Activated naive CD4-positive, alpha-beta T cell treated with anti-CD3 and anti-CD28 coated beads for 36 hours (primary cell): ENCODE measurements at regions of chr6 and their contacts with region 1.

Region 1: DNA sequence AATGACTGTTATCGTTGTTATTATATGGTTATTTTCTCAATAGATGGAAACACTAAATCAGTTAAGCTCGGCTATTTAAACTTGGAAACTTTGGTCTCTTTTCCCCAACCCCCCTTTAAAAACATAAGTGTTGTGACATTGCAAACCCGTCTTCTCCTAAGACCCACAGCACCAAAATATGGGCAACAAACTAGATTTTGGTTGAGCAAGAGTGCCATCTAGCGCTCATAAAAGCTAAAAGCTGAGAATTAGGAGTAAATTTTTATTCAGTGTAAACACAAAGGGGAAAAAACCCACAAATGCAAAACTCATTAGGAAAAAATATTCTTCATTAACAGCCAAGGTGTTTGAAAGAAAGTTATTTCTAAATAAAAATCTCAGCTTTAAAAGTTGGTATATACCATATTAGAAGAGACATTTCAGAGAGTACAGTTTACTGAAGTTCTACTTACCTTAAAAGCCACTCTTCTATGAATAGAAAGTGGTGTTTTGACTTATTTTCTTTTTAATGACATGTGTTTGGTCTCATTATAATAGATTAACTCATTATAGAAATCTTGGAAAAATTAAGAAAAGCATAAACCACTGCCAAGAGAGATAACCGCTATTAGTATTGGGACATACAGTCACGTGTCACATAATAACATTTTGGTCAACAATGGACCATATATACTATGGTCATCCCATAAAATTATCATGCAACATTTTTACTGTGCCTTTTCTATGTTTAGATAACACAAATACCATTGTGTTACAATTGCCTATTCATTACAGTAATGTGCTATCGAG is 21.1 kb downstream of the SESN1 start:
- DNase-seq: peak; percentile 66
- H3K4me3 Mint-ChIP-seq: peak overlapping the region; percentile 20
- H3K27ac Mint-ChIP-seq: no peak overlapping the region
- H3K4me1 Mint-ChIP-seq: peaks cover 20% of the 10 kb centered on the region
- H3K27me3 Mint-ChIP-seq: no peaks in the 10 kb centered on the region

Region 2: DNA sequence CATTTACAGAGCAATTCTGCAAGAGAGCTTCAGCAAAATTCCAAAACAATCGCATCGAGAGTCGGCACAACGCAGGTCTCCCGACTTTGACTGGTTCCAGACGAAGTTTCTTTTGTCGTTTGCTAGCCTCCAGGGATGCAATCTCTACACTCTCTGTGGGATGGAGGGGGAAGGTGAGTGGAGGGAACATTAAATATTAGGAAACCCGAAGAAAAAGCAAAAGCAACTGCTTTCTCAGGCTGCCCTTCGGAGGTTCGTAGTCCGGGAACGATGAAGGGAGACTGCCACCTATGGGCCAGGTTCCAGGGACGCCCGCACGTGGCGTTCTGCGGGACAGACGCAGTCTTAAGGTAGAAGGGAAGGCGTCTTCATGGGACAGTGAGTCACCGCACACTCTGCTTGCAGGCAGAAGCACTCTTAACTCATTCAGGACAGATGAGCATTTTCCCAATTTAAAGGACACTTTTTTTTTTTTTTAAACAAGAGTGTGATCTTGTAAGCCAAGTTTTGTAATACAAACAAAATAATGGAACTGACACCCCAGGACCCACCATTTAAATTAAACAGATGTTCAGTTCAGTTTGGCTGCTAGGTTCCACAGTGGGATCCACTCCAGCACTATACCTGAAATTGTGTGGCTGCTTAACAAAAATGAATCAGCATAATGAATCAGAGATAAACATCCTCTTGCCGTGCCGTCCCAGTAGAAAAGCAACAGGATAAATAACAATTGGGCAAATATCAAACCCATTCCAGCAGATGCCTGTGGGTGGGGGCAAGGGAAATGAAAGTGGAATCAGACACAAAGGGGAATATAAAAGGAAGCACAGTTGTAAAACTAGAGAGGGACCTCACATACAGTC is 291.1 kb before region 1 on chr6:
- CTCF ChIA-PET with region 1: interaction called, 5 read pairs
- intact Hi-C with region 1: loop called (anchors 1 kb)
- DNase-seq: peak; percentile 92
- H3K4me3 Mint-ChIP-seq: peak overlapping the region; percentile 68
- H3K27ac Mint-ChIP-seq: no peak overlapping the region
- H3K4me1 Mint-ChIP-seq: peaks cover 10% of the 10 kb centered on the region
- H3K27me3 Mint-ChIP-seq: peaks cover 3% of the 10 kb centered on the region

Region 3: GRCh38 chr6:108835218-108835850 is 238.2 kb before region 1 on chr6:
- CTCF ChIA-PET with region 1: interaction called, 9 read pairs
- intact Hi-C with region 1: loop called (anchors 1 kb)
- DNase-seq: peak; percentile 92
- H3K4me3 Mint-ChIP-seq: no peak overlapping the region
- H3K27ac Mint-ChIP-seq: no peak overlapping the region
- H3K4me1 Mint-ChIP-seq: peaks cover 19% of the 10 kb centered on the region
- H3K27me3 Mint-ChIP-seq: peaks cover 3% of the 10 kb centered on the region

Region 4: DNA sequence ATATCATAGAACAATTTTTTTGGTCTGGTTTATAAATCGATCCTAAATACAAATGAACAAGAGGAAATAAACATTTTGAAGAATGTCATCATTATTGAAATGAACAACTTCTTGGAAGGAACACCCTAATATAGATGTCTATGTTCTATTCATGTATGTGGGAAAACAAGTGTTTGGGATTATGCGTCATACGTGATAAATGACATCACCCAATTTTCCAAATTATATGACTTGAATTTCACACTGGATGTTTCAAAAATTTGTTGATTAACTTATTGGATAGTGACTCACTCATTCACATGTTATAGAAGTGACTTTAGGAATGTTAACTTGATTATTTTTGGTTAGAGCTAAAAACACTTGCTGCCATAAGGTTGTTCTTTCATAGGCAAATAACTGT is 206.7 kb before region 1 on chr6:
- CTCF ChIA-PET with region 1: no interaction called
- intact Hi-C with region 1: no loop called
- DNase-seq: no peak
- H3K4me3 Mint-ChIP-seq: no peak overlapping the region
- H3K27ac Mint-ChIP-seq: no peak overlapping the region
- H3K4me1 Mint-ChIP-seq: peaks cover 3% of the 10 kb centered on the region
- H3K27me3 Mint-ChIP-seq: no peaks in the 10 kb centered on the region

Region 5: GRCh38 chr6:108914235-108915022 is 159.1 kb before region 1 on chr6:
- CTCF ChIA-PET with region 1: interaction called, 29 read pairs
- intact Hi-C with region 1: loop called (anchors 1 kb)
- DNase-seq: peak; percentile 71
- H3K4me3 Mint-ChIP-seq: no peak overlapping the region
- H3K27ac Mint-ChIP-seq: no peak overlapping the region
- H3K4me1 Mint-ChIP-seq: no peaks in the 10 kb centered on the region
- H3K27me3 Mint-ChIP-seq: no peaks in the 10 kb centered on the region

Region 6: GRCh38 chr6:108947114-108947854 is 126.3 kb before region 1 on chr6:
- CTCF ChIA-PET with region 1: interaction called, 12 read pairs
- intact Hi-C with region 1: loop called (anchors 1 kb)
- DNase-seq: no peak
- H3K4me3 Mint-ChIP-seq: no peak overlapping the region
- H3K27ac Mint-ChIP-seq: no peak overlapping the region
- H3K4me1 Mint-ChIP-seq: peaks cover 27% of the 10 kb centered on the region
- H3K27me3 Mint-ChIP-seq: no peaks in the 10 kb centered on the region

Region 7: DNA sequence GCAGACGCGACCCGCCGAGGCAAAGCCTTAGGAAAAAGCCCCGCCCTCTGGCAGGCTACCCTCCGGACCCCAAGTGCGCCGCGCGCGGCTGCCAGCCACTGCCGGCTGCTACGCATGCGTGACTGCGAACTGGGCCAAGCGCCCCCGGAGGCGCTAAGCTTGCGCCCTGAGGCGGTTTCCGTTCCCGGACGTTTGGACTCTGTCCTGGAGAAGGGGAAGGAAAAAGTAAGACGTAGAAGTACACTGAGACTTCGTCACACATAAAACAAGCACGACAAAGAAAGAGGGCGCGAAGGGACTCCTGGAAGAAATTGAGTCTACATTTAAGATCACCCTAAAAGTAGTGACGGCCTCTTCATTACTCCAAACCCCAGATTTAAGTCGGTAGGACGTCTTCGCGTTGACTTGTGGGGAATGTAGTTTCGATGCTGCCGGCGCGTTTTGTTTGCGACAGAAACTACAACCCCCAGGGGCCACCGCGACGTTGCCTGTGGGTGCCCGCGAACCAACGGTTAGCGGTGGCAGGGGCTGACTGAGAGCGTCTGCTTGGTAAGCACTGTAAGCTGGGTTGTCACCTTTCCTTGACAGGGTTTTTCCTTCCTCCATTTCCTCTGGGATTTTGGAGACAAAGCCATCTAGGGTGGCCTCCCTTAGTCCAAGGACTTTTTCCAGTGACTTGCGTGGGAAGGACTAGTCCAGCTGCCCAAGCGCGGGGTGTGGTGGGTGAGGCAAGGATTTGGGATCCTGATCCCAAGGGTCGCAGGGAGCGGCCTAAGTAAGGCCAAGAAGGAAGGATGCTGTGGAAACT is 21.7 kb after region 1 on chr6 and contains the start of gene CEP57L1:
- CTCF ChIA-PET with region 1: no interaction called
- intact Hi-C with region 1: no loop called
- DNase-seq: peak; percentile 97
- H3K4me3 Mint-ChIP-seq: peak within 1 kb of the TSS; percentile 84
- H3K27ac Mint-ChIP-seq: peak within 1 kb of the TSS; percentile 95
- H3K4me1 Mint-ChIP-seq: peaks cover 38% of the 10 kb centered on the region
- H3K27me3 Mint-ChIP-seq: no peaks in the 10 kb centered on the region
- total RNA-seq, gene CEP57L1: 33.3 to 33.5 TPM